PC-9 (cell line): ENCODE measurements at regions of chr7 and their contacts with region 1.

Region 1: DNA sequence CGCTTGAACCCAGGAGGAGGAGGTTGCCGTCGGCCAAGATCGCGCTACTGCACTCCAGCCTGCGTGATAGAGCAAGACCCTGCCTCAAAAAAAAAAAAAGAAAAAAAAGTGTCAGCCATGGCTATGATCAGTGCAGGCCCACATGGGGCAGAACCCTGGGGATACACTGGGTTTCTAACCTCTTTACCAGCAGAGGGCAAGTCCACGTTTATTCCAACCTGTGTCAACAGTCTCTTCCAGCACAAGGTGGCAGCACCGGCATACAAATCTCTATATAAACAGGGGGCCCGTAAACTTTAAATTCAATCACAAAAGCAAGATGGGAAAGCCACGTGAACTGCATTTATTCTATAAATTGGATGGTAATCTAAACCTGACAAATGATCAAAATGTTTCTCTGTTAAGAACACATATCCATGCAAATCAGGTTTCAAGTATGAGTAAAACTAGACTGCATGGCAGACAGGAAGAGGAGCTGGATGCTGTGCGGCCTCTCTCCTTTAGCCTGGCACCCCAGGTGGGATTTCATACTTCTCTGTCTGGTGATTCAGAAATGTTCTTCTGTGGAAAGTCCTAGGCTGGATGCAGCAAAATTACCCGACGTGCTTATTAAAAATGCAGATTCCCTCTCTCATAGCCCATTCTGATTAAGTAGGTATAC is 60.0 kb upstream of the STEAP1B start:
- DNase-seq: peak; percentile 78 to 79
- H3K4me3 ChIP-seq: no peak overlapping the region
- H3K27ac ChIP-seq: peak overlapping the region; percentile 84
- H3K4me1 ChIP-seq: peaks cover 50% of the 10 kb centered on the region
- H3K27me3 ChIP-seq: no peaks in the 10 kb centered on the region
- CTCF ChIP-seq: peak; percentile 99

Region 2: DNA sequence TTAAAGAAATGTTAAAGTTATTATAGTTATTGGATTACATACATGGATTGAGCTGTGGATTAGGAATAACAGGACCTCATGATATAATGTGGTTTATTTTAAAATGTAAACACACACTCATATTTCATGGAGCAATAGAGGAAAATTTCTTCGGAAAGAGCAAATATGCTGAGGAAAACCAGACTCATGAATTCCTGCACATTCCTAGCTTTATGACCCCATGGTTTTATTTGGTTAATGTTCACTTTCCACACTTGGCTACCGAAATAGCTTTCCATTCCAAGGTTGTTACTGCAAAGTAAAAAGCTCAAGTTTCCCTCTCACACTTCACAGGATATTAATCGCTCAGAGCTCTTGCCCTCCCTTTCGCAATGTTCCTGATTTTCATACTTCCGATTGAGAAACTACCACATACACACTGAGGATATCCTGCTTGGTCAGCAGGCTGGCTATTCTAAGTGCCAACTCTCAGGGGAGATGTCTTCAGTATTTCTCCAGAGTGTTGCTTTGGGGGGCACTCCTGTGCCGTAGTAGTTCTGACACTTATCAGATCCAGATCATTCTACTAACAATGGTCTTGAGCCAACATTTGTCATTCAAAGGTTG is 17.5 kb after region 1 on chr7:
- CTCF ChIA-PET with region 1: interaction called, 18 read pairs
- POLR2A ChIA-PET with region 1: interaction called, 18 read pairs
- intact Hi-C with region 1: loop called (anchors 1 kb)
- DNase-seq: peak; percentile 54 to 100
- H3K4me3 ChIP-seq: peak overlapping the region; percentile 19; the same call in 1 of the 2 replicates
- H3K27ac ChIP-seq: peak overlapping the region; percentile 95
- H3K4me1 ChIP-seq: peaks cover 78% of the 10 kb centered on the region
- H3K27me3 ChIP-seq: no peaks in the 10 kb centered on the region
- CTCF ChIP-seq: no peak

Region 3: DNA sequence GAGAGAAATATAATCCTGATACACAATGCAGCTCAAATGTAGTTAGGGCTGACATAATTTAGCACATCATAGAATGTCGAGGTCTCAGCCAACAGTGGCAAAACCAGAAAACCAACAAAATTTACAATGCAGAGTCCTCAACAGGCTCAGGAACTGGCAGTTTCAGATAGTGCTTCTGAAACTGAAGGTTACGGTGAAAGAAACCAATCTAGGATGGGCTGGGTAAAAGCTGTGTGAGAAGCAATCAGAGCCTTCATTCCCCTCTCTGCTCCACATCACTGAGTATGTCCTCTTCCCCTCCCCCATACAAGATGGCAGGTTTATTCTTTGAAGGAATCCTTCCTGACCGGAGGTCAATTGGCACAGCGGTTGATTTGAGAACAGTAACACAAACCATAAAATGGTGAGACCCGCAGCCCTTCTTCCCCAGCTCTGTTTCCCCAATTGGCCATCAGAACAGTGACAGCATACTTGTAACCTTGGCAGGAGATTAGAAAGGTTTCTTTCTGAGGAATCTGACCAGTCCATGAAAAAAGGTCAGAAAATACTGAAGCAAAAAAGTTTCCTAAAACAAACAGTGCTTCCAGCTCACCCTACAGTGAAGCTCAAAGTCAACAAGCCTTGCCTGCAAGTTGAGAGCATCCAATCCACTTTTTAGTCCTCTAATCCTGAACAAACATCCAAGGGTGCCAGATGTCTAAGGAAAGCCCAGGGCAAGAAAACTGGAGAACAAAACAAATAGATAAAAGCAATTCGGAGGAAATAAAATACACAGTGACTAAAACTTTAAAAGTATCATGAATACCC is 113.1 kb after region 1 on chr7:
- CTCF ChIA-PET with region 1: interaction called, 3 read pairs
- POLR2A ChIA-PET with region 1: interaction called, 7 read pairs
- intact Hi-C with region 1: loop called (anchors 1 kb)
- DNase-seq: peak; percentile 35 to 99
- H3K4me3 ChIP-seq: no peak overlapping the region
- H3K27ac ChIP-seq: peak overlapping the region; percentile 57
- H3K4me1 ChIP-seq: peaks cover 55% of the 10 kb centered on the region
- H3K27me3 ChIP-seq: no peaks in the 10 kb centered on the region
- CTCF ChIP-seq: no peak

Region 4: DNA sequence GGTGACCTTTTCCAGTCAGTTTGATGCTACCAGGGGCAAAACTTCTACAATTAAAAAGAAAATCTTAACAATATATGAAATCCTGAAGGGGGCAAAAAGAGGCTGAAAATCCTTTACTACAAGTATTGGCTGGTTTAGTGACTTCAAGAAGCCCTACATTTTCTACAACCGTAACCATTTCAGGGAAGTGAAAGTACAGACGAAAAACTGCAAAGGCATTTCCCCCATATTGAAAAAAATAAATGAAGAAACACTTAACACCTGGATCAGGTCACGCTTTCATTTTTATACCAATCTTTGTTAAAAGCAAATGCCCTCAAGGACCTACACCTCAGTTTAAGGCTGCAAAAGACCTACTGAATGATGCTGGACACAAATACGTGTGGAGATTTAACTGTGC is 205.7 kb after region 1 on chr7:
- CTCF ChIA-PET with region 1: interaction called, 3 read pairs
- POLR2A ChIA-PET with region 1: interaction called, 10 read pairs
- intact Hi-C with region 1: no loop called
- DNase-seq: no peak
- H3K4me3 ChIP-seq: no peak overlapping the region
- H3K27ac ChIP-seq: no peak overlapping the region
- H3K4me1 ChIP-seq: no peaks in the 10 kb centered on the region
- H3K27me3 ChIP-seq: no peaks in the 10 kb centered on the region
- CTCF ChIP-seq: no peak

Region 5: DNA sequence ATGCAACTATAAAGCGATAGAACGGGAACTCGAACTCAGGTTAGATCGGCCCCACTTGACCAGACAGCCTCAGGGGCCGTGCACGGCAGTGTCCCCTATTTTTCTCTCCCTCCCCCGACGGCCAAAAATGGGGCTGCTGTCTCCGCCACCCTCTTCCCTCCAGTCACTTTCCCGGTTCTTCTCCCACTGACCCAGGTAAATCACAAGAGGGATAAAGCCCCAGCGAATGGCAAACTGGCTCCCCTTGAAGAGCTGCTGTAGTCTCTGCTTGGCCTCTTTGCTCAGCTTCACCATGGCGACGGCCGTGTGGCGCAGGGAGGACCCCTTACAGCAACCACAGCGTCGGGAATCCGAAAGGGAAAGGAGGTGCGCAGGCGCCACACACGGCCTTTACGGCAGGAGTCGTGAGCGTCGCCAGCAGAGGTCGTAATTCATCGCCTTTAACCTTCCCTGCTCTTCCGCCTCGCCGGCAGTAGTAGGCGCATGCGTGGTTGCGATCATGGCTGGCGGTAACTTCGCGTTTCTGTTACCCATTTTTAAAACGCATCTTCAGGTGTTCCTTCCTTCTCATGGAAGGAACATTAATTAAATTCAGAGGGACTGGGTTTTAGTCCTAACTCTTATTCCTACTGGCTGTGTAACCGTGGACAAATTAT is 262.7 kb after region 1 on chr7 and contains the start of gene TOMM7:
- CTCF ChIA-PET with region 1: no interaction called
- POLR2A ChIA-PET with region 1: no interaction called
- intact Hi-C with region 1: loop called (anchors 1 kb)
- DNase-seq: peak; percentile 90 to 94
- H3K4me3 ChIP-seq: peak within 1 kb of the TSS; percentile 99
- H3K27ac ChIP-seq: peak within 1 kb of the TSS; percentile 33
- H3K4me1 ChIP-seq: peaks cover 29% of the 10 kb centered on the region
- H3K27me3 ChIP-seq: no peaks in the 10 kb centered on the region
- CTCF ChIP-seq: peak; percentile 65
- total RNA-seq, gene TOMM7: 588 and 703 TPM in 2 replicates

Region 6: DNA sequence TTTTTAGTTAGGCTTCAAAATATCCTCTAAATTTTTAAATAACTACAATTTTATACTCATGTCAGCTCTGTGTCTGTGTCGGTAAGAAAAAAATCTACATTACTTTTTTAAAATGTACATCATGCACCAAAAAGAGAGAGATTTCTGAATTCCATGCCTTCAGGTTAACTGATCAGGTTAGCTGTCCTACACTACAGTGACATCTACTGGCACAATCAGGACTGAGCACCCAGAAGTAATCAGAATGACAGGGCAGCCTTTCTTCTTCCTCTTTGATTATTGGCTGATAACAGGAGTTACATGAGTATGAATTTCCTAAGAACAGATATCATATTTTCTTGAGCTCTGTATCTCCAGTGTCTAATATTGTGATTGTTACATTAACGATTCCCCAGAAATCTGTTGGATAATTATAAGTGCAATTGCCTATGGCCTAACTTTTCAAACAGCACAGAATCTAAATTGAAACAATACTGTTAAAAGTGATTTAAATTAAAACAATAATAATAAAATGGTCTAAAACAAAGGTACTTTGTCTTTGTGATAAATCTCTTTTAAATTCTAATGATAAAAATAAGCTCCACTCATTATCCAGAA is 495.7 kb after region 1 on chr7:
- CTCF ChIA-PET with region 1: interaction called, 12 read pairs
- POLR2A ChIA-PET with region 1: no interaction called
- intact Hi-C with region 1: loop called (anchors 1 kb)
- DNase-seq: peak; percentile 49 to 61
- H3K4me3 ChIP-seq: no peak overlapping the region
- H3K27ac ChIP-seq: no peak overlapping the region
- H3K4me1 ChIP-seq: no peaks in the 10 kb centered on the region
- H3K27me3 ChIP-seq: no peaks in the 10 kb centered on the region
- CTCF ChIP-seq: peak; percentile 98

Region 7: GRCh38 chr7:23712368-23713284 is 1152.7 kb after region 1 on chr7:
- CTCF ChIA-PET with region 1: interaction called, 26 read pairs
- POLR2A ChIA-PET with region 1: no interaction called
- intact Hi-C with region 1: no loop called
- DNase-seq: peak in 1 of 2 experiments; percentile 71
- H3K4me3 ChIP-seq: no peak overlapping the region
- H3K27ac ChIP-seq: no peak overlapping the region
- H3K4me1 ChIP-seq: peaks cover 22% of the 10 kb centered on the region
- H3K27me3 ChIP-seq: no peaks in the 10 kb centered on the region
- CTCF ChIP-seq: peak; percentile 95